ENCODE measurements at regions of chr12 and their contacts with region 1.

Region 1: DNA sequence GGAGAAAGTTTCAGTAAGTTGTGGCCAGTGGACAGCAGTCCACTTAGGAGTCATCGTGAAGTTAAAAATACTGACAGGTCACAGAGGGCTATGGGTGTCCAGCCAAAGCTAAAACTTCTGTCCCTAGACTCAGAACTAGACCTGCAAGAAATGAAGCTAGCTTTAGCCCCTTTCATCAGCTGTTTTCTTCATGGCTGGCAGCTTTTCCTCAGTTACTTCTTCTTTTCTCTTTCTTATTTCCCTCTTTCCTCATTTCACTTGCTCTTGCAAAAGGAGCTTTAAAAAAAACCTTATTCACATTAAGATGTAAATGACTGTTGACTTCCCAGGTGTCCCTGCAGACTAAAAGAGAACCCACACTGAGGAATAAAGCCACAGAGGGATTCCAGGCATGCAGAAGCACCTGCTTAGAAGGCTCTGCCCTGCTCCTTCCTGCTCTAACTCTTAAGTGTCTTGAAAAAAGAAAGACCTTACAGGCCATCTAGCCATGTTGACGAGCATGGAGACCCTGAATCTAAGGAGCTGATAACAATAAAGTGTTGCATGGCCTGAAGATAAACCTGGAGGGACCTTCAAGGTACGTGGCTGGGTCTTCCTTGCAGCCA is 69.7 kb upstream of the CCND2 start:
- DNase-seq: no peak
- H3K4me3 Mint-ChIP-seq: no peak overlapping the region
- H3K27ac Mint-ChIP-seq: no peak overlapping the region
- H3K4me1 Mint-ChIP-seq: no peaks in the 10 kb centered on the region
- H3K27me3 Mint-ChIP-seq: peaks cover 4% of the 10 kb centered on the region

Region 2: GRCh38 chr12:4215229-4216186 is 11.6 kb after region 1 on chr12:
- CTCF ChIA-PET with region 1: interaction called, 10 read pairs
- POLR2A ChIA-PET with region 1: interaction called, 4 read pairs
- DNase-seq: peak; percentile 34
- H3K4me3 Mint-ChIP-seq: peak overlapping the region; percentile 31
- H3K27ac Mint-ChIP-seq: peak overlapping the region; percentile 87
- H3K4me1 Mint-ChIP-seq: peaks cover 33% of the 10 kb centered on the region
- H3K27me3 Mint-ChIP-seq: no peaks in the 10 kb centered on the region

Measured in activated CD4-positive, alpha-beta T cell treated with anti-CD3 and anti-CD28 coated beads, Interleukin-2, amount 10 ng/mL, durations not matched to agents 7 days and 5 days (primary cell).